Right ventricle myocardium inferior (tissue), 1 donor: ENCODE measurements at regions of chr3 and their contacts with region 1.

Region 1: GRCh38 chr3:173045770-173046382 is 95.2 kb downstream of the SPATA16 start:
- DNase-seq: no peak
- ATAC-seq: no peak

Region 2: DNA sequence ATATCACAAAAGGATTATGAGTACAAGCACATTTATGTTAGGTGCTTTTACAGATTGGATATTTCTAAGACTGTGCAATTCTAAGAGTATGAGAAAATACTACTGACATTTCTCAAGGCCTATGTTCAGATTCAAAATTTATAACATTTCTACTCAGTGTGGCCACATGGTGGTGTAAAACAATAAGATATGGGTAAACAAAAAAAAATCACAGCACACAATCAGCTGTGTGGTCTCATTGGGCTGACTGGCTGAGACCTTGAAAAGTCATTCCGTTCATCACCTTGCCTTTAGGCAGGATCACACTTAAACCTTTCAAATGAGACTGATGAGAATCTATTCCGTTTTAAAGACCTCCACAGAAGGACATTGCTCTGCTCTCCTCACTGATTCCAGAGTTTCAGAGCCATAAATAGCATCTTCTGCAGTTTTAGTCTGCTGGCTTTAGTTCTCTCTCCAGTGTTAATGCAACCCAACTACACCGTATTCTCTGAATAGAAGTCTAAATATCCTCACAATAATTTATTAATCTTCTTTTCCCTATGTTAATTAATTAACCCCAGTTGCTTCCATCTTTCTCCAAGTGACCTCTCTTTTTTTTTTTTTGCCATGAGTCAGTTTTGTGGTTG is 63.0 kb before region 1 on chr3:
- intact Hi-C with region 1: loop called (anchors 5 kb)
- DNase-seq: no peak
- ATAC-seq: peak; percentile 50